Astrocyte of the cerebellum (primary cell): ENCODE measurements at regions of chr17 and their contacts with region 1.

Region 1: GRCh38 chr17:77325577-77326075 is 184.9 kb downstream of the SEC14L1 start:
- DNase-seq: no peak
- H3K4me3 ChIP-seq: no peak overlapping the region
- CTCF ChIP-seq: no peak

Region 2: DNA sequence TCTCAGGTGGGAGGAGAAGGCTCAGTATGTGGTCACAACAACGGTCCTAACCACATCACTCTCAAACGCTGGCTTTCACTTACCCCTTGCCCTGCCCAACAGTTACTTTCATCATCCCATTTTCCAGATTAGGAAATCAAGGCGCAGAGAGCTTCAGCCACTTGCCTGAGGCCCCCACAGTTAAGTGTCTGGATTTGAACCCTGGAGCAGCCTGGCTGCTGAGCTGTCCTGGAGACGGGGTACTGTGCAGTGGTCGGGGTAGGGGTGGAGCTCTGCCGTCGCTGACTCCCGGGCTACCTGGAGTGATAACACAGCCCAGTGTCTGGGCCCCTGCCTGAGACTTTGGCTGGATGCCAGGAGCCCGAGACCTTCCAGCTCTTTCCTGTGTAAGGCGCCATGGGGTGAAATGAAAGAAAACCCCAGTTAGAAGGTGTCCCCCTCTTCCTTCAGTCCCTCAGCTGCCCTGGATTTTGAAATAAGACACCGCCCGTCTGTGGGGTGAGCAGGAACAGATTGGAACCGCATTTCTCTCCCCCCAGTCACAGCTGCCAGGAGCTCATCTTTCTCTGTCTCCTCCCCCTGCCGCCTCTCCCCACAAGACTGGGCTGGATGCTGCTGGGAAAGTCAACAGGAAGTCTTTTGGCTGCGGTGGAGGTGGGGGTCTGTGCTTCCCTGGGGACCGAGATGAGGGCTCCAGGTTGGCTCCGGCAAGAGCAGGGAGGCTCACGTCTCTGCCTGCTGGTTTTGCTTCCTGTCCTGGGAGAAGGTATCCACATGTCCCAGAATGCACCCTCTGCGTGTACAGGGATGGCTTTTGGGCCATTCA is 95.4 kb after region 1 on chr17:
- in situ Hi-C with region 1: loop called (anchors 5 kb)
- DNase-seq: peak; percentile 63
- H3K4me3 ChIP-seq: peak overlapping the region; percentile 9
- CTCF ChIP-seq: no peak